ENCODE measurements at regions of chr2 and their contacts with region 1.

Region 1: DNA sequence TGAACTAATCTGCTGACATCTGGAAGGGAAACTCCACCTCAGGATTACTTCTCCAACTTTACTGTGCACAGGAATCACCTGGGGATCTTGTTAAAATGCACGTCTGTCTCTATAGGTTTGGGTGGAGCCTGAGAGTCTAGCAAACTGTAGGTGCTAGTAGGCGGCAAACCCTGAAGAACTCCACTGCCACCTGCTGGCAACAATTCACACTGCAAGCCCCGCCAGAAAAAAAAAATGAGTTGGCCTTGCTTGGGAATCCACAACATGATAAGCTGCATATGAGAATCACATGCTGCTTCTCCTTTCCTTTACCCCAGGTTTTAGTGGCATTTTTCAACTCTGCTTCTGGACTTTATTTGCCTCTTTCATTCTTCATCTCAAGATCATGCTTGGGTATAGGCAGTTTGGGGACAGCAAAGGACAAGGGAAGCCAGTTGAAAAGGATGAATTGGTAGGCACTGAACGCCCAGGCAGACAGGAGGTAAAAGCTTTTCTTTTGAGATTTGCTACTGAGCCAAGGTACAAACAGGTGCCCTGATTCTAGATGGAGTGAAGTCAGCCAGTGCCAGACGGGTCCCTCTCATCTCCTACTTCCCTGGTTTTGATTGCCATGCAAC is 88.8 kb downstream of the VIT start:
- DNase-seq: peak; percentile 66
- ATAC-seq: peak; percentile 86
- H3K4me3 ChIP-seq: no peak overlapping the region
- H3K27ac ChIP-seq: peak overlapping the region; percentile 24; the same call in 1 of the 2 replicates
- H3K4me1 ChIP-seq: no peaks in the 10 kb centered on the region; the same call in 1 of the 2 replicates
- H3K27me3 ChIP-seq: no peaks in the 10 kb centered on the region; the same call in 1 of the 2 replicates
- CTCF ChIP-seq: peak; percentile 99

Region 2: DNA sequence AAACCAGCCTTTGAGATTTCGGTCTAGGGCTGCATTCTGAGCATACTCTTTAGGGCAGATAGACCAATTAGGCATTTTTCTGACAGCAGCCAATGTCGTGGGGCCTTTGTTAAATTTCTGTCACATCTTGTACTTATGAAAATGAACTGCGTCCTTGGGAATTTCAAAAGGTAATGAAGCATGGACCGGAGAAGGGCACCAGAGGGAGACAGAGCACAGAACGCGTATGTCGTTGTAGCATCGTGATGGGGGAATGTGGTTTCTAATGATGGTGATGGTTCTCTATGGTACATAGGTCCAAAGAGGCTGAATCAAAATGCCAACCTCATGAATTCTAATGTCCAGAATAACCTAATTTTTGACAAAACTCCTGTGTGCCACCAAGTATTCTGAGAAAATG is 913.6 kb before region 1 on chr2:
- CTCF ChIA-PET with region 1: no interaction called
- POLR2A ChIA-PET with region 1: no interaction called
- in situ Hi-C with region 1: no loop called
- intact Hi-C with region 1: loop called (anchors 10 kb)
- DNase-seq: no peak
- ATAC-seq: peak; percentile 89
- H3K4me3 ChIP-seq: no peak overlapping the region
- H3K27ac ChIP-seq: no peak overlapping the region
- H3K4me1 ChIP-seq: no peaks in the 10 kb centered on the region
- H3K27me3 ChIP-seq: no peaks in the 10 kb centered on the region
- CTCF ChIP-seq: peak; percentile 88

Region 3: DNA sequence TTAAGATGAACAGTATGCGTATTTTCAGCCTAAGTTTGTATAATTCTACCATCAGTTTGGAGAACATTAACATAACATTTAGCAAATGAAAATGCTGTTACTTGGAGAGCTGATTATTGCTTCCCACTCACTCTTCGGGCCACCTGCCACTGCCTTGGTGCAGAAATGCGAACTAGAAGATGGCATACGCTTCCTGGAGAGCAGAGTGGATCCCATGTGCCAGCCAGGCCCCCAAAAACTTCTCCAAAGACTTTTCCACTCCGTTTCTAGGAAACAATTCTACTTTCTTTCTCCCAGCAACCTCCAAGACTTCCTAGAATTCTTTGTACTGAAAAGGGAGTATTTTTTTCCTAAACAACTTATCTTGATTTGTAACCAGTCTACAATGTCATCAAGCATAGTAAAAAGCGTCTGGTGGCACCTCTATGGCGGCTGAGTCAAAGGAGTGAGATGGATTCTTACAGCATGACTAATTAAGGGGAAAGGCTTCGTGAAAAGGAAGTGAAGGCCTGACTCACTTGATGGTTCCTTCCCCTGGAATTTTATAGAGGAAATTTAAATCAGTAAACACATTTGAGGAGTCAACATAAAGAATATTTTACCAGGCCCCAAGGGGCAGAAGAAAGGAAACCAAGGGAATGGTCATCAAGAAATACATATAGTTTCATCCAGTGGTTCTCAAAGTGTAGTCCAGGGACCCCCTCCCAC is 223.9 kb before region 1 on chr2:
- CTCF ChIA-PET with region 1: no interaction called
- POLR2A ChIA-PET with region 1: no interaction called
- in situ Hi-C with region 1: no loop called
- intact Hi-C with region 1: loop called (anchors 10 kb)
- DNase-seq: peak; percentile 86
- ATAC-seq: peak; percentile 94
- H3K4me3 ChIP-seq: 0 out of 4 replicates have a peak overlapping the region, but pooled peaks of 1 of the 2 experiments have one; percentile 21
- H3K27ac ChIP-seq: peak overlapping the region; percentile 99
- H3K4me1 ChIP-seq: peaks cover 87% of the 10 kb centered on the region
- H3K27me3 ChIP-seq: no peaks in the 10 kb centered on the region
- CTCF ChIP-seq: no peak

Region 4: GRCh38 chr2:36800381-36800780 is 15.1 kb after region 1 on chr2:
- CTCF ChIA-PET with region 1: no interaction called
- POLR2A ChIA-PET with region 1: no interaction called
- in situ Hi-C with region 1: no loop called
- intact Hi-C with region 1: no loop called
- DNase-seq: no peak
- ATAC-seq: no peak
- H3K4me3 ChIP-seq: no peak overlapping the region
- H3K27ac ChIP-seq: no peak overlapping the region
- H3K4me1 ChIP-seq: no peaks in the 10 kb centered on the region
- H3K27me3 ChIP-seq: no peaks in the 10 kb centered on the region
- CTCF ChIP-seq: no peak

Region 5: DNA sequence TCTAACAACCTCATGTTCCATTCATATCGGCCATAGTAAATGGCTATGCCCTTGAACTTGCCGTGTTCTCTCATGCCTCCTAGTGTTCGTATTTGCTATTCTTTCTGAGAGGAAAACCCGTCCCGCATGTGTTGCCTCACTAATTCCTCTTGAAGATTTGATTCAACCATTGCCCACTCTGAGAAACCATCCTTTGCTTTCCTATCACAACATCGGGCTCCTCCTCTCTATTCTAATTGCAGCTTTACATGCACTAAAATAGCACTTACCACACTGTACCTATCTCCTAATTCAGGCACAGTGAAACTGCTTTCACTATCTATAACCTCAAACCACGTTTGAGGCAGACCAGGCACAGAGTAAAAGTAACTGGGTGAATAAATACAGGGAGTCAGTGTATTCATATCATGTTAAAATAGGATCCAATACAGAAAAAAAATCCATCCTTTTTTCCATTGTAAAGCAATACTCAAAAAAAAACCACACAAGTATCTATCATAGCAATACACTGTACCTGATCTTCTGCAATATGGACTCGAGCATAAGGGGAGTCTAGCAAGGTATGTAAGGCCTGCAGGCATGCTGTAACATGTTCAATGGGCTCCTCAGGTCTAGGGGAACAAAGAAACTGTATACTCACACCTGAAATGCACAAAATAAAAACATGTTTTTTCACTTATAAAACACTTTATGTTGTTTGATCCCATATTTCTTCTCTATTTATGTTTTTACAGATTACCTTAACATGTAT is 220.0 kb after region 1 on chr2:
- CTCF ChIA-PET with region 1: no interaction called
- POLR2A ChIA-PET with region 1: no interaction called
- in situ Hi-C with region 1: no loop called
- intact Hi-C with region 1: loop called (anchors 5 kb)
- DNase-seq: peak; percentile 20
- ATAC-seq: peak; percentile 91
- H3K4me3 ChIP-seq: no peak overlapping the region
- H3K27ac ChIP-seq: no peak overlapping the region
- H3K4me1 ChIP-seq: no peaks in the 10 kb centered on the region
- H3K27me3 ChIP-seq: no peaks in the 10 kb centered on the region
- CTCF ChIP-seq: peak; percentile 84